ENCODE measurements at regions of chr1 and their contacts with region 1.

Region 1: DNA sequence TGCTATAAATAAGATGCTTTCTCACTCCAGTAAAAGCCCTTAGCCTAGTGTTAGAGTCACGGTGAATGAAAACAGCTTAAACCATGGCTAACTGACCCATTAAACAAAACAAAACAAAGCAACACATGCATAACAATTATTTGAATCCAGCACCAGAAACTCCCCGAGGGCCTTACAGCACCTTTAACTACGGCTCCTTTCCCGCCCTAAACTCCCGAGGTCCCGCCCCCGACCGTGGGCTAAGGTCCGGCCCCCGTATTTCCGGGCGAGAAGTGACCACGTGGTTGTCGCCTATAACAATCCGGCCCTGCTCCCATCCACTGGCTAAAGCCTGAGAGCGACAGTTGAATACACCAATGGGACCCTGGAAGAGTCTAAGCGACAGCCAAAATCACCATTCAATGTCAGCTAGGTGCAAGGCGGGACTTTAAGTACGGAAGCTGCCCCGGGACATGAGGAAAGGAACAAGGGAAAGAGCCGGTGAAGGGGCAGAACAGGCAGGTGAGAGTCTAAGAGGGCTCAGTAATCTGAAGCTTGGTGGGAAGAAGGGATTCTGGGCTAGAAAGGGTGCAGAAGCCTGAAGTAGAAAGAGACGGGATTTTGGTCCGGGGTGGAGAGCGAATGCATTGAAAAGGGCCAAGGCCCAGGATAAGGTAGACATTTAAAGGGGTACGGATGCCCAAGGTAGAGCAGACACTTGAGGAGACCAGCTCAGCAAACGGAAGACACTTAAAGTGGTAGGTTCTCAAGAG is at the start of gene FLAD1:
- DNase-seq: peak; percentile 96
- H3K4me3 Mint-ChIP-seq: no peak within 1 kb of the TSS
- H3K27ac Mint-ChIP-seq: peak within 1 kb of the TSS; percentile 42
- H3K4me1 Mint-ChIP-seq: peaks cover 8% of the 10 kb centered on the region
- H3K27me3 Mint-ChIP-seq: no peaks in the 10 kb centered on the region
- total RNA-seq, gene FLAD1: 69.2 and 74.3 TPM in 2 replicates

Region 2: GRCh38 chr1:154943649-154944400 is 39.2 kb before region 1 on chr1:
- intact Hi-C with region 1: no loop called
- DNase-seq: peak; percentile 29
- H3K4me3 Mint-ChIP-seq: peak overlapping the region; percentile 0
- H3K27ac Mint-ChIP-seq: peak overlapping the region; percentile 93
- H3K4me1 Mint-ChIP-seq: peaks cover 62% of the 10 kb centered on the region
- H3K27me3 Mint-ChIP-seq: no peaks in the 10 kb centered on the region

Region 3: DNA sequence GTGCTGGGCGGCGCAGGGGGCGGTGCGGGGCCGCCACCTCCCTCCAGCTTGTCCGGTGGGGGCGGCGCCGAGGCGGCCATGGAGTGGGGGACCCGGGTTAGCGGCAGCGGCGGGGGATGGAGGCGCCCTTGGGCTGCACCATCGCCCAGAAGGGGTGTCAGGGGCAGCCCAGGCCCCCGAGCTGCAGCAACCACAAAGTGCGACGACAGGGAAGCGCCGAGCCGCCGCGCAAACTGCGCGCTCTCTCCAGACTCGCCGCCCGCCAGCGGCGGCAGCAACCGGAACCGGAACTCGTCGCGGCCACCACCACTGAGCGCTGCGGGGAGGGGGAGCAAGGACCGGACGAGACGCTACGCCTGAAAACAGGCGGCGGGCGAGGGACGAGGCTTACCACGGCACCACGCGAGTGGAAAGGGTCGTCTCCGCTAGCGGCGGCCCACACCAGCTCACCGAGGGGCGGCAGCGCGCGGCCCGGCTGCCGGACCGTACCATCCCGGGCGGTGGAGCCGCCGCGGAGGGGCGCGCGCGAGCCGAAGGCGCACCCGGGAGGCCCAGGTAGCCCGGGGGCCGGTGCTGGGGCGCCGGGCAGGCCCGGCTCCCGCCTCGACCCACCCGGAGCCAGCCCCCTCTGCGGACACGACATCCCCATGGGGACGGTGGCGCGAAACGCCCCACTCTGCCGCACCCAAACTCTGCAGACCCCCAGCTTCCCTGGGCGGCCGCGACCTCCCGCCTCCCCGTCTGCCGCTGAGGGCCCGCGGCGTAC is 21.4 kb before region 1 on chr1 and contains the start of gene PYGO2:
- intact Hi-C with region 1: loop called (anchors 1 kb)
- DNase-seq: peak; percentile 82
- H3K4me3 Mint-ChIP-seq: peak within 1 kb of the TSS; percentile 96
- H3K27ac Mint-ChIP-seq: peak within 1 kb of the TSS; percentile 93
- H3K4me1 Mint-ChIP-seq: peaks cover 36% of the 10 kb centered on the region
- H3K27me3 Mint-ChIP-seq: peaks cover 2% of the 10 kb centered on the region
- total RNA-seq, gene PYGO2: 34.7 and 35.0 TPM in 2 replicates

Region 4: GRCh38 chr1:155050560-155051341 is 67.7 kb after region 1 on chr1 and contains the start of gene ADAM15:
- intact Hi-C with region 1: loop called (anchors 1 kb)
- DNase-seq: peak; percentile 79
- H3K4me3 Mint-ChIP-seq: peak within 1 kb of the TSS; percentile 88
- H3K27ac Mint-ChIP-seq: peak within 1 kb of the TSS; percentile 88
- H3K4me1 Mint-ChIP-seq: peaks cover 28% of the 10 kb centered on the region
- H3K27me3 Mint-ChIP-seq: no peaks in the 10 kb centered on the region
- total RNA-seq, gene ADAM15: 82.9 and 86.8 TPM in 2 replicates

Measured in activated T-helper 1 cell treated with anti-CD3 and anti-CD28 coated beads, Interleukin-12 subunit alpha, Interleukin-12 subunit beta, Interleukin-2, Interleukin-4 antibody, amounts not matched to agents 30 ng/mL and 10 ng/mL and 1 ng/mL, durations not matched to agents 14 hours and 24 hours and 36 hours (primary cell).